Ovary (tissue), 10 donors: ENCODE measurements at regions of chr2 and their contacts with region 1.

Region 1: DNA sequence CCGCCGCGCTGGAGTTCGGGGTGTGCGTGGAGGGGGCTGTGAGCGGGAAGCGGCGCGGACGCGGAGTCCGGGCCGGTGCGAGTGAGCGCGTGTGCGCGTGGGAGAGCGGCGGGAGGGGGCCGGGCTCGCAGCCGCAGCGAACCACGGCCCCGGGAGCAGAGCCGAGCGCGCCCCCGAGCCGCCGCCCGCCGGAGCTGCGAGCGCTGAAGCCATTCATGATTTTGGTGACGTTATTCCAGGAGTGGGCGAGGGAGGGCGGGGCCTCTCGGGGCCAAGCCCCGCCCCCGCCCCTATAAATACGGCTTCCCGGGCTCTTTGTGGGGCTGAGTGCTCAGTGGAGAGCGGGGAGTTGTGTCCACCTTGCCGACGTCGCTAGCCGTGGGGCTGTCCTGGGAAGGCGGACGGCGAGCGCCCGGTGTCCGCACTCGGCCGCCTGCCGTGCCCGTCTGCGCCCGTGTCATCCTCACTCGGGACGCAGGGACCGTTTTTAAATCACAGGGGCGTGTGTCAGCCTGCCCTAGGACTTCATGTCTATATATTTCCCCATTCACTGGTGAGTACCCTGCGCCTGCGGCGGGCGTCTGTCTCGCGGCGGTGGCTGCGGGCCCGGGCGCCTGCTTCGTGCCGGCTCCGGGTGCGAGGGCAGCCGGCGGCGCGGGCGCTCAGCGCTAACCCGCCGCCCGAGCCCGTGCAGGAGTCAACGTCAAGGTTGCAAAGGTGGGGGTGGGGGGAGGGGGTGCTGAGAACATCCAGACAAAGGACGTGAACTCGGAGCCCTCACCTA is at the start of gene LBH:
- DNase-seq: peak; percentile 92 to 97 (median 94)
- H3K4me3 ChIP-seq: peak within 1 kb of the TSS; percentile 71
- H3K27ac ChIP-seq: peak within 1 kb of the TSS; percentile 81 to 95
- H3K4me1 ChIP-seq: peaks cover 10% of the 10 kb centered on the region
- H3K27me3 ChIP-seq: no peaks in the 10 kb centered on the region
- CTCF ChIP-seq: no peak
- EP300 ChIP-seq: no peak
- POLR2A ChIP-seq: peak; percentile 98
- total RNA-seq, gene LBH: 50.4 to 260 (median 121) TPM

Region 2: GRCh38 chr2:29967334-29967733 is 264.1 kb before region 1 on chr2:
- intact Hi-C with region 1: no loop called
- DNase-seq: no peak
- H3K4me3 ChIP-seq: no peak overlapping the region
- H3K27ac ChIP-seq: no peak overlapping the region
- H3K4me1 ChIP-seq: no peaks in the 10 kb centered on the region
- H3K27me3 ChIP-seq: no peaks in the 10 kb centered on the region
- CTCF ChIP-seq: no peak
- EP300 ChIP-seq: no peak
- POLR2A ChIP-seq: no peak

Region 3: GRCh38 chr2:30373881-30374302 is 142.5 kb after region 1 on chr2:
- intact Hi-C with region 1: no loop called
- DNase-seq: no peak
- H3K4me3 ChIP-seq: no peak overlapping the region
- H3K27ac ChIP-seq: no peak overlapping the region
- H3K4me1 ChIP-seq: peaks cover 3% of the 10 kb centered on the region
- H3K27me3 ChIP-seq: no peaks in the 10 kb centered on the region
- CTCF ChIP-seq: no peak
- EP300 ChIP-seq: no peak
- POLR2A ChIP-seq: no peak

Region 4: GRCh38 chr2:30410217-30410616 is 178.8 kb after region 1 on chr2:
- intact Hi-C with region 1: loop called in 2 of 4 experiments (anchors 5 kb)
- DNase-seq: no peak
- H3K4me3 ChIP-seq: no peak overlapping the region
- H3K27ac ChIP-seq: peak overlapping the region in 1 of 2 donors; percentile 69
- H3K4me1 ChIP-seq: peaks cover 33% of the 10 kb centered on the region
- H3K27me3 ChIP-seq: no peaks in the 10 kb centered on the region
- CTCF ChIP-seq: no peak
- EP300 ChIP-seq: no peak
- POLR2A ChIP-seq: no peak

Region 5: DNA sequence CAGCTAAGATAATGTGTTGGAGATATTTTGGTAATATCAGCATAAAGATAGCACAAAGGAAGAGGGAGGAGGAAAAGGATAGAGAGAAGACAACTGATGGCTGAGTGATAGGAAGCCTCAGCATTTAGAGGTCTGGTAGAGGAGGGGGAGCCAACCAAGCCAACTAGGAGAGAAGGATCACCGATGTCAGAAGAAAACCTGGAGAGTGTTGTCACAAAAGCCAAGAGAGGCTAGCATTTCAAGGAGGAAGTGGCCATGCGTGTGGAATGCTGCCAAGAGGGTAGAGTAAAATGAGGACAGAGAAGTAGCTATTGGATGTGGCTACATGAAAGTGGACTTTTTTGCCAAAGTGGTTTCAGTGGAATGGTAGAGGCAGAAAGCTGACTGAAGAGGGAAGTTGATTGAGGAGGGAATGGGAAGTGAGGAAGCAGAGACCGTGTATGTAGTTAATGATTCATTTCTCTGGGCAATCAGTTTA is 250.0 kb after region 1 on chr2:
- intact Hi-C with region 1: loop called in 1 of 4 experiments (anchors 10 kb)
- DNase-seq: no peak
- H3K4me3 ChIP-seq: no peak overlapping the region
- H3K27ac ChIP-seq: no peak overlapping the region
- H3K4me1 ChIP-seq: peaks cover 4% of the 10 kb centered on the region
- H3K27me3 ChIP-seq: no peaks in the 10 kb centered on the region
- CTCF ChIP-seq: no peak
- EP300 ChIP-seq: no peak
- POLR2A ChIP-seq: no peak